Aorta (tissue), 5 donors: ENCODE measurements at regions of chr2 and their contacts with region 1.

Region 1: DNA sequence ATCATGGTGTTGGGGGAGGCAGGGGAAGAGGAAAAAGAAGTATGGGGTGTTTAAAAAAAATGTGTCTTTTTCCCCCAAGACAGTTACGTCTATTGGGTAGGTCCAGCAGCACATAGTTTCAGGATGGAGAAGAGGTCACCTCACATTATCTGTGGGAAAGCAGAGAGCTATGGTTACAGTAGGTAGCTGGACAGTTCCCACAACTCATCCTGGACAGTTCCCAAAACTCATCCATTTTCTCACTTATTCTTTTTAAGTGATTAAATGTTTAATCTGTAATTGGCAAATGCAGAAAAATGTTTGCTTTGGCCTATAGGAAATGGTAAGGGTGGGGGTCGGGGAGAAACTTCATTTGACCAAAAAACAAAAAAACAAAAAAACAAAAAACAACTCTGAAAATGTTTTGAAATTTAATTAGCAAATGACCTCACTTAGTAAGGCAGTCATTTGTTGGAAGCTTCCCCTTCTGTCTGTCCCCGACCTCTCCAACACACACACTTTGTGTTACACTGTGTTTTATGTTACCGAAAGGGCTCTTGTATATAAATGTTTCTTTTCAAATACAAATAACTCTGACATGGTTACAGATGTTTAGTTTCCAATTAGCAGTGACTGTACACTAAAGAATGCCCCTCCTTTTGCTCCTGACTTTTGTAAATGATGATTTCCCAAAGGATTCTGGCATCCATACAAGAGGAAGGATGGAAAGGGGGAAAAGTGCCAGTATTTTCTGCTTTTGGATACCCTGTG is 173.3 kb upstream of the ZFP36L2 start:
- DNase-seq: no peak
- ATAC-seq: peak; percentile 21
- H3K4me3 ChIP-seq: no peak overlapping the region
- H3K27ac ChIP-seq: peak overlapping the region; percentile 42 to 85
- H3K4me1 ChIP-seq: peaks cover 0 to 14% of the 10 kb centered on the region in 2 donors
- H3K27me3 ChIP-seq: no peaks in the 10 kb centered on the region

Region 2: DNA sequence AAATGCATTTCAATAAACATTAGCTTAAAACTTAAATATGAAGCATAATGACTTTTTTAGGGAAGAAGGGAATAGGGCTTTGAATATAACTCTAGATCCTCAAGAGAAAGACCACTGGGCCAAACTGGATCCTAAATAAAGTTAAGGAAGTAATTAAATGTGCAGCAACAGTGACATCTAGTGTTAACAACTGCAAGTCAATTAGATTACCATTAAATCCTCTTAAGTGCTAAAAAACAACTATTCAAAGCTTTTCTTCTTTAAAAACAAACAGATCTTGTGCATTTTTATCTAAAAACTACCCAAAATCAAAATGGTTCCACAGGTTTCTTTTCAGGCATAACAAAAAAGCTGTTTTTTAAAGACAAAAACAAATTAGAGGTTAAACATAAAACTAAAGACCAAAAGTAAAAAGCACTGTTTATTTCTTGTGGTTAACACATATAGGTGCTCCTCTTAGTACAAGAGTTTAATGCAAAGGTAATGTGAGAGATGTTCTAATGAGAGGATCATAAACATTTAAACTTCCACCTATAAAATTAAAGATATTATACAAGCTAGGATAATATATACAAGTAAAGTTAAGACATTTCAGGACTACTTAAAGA is 84.7 kb after region 1 on chr2:
- intact Hi-C with region 1: no loop called
- DNase-seq: no peak
- ATAC-seq: peak; percentile 79
- H3K4me3 ChIP-seq: no peak overlapping the region
- H3K27ac ChIP-seq: no peak overlapping the region
- H3K4me1 ChIP-seq: peaks cover 0 to 8% of the 10 kb centered on the region in 2 donors
- H3K27me3 ChIP-seq: no peaks in the 10 kb centered on the region

Region 3: DNA sequence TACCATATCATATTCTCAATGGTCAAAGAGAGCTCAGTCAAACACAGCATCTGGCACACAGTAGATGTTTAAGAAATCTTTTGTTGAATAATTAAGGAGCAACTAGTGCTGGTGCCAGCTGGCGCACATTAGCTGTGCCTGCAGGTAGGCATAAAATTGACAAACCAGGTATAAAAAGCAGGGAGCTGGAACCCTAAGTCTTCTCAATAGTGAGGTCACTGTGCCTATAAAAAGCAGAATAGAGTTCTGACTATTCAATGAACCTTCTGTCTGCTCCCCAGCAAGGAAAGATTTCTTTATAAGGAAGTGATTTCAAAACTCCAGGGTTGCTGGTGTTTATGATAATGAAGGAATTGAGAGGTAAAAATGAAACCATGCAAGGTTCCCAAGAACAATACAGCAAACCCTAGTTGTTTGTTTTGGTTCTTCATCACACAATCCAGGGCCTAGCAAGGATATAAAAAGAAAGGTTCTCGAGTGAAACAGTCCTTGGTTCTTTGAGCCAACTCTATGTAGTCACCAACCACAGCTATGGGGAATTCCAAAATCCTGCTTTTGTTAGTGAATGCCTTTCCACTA is 120.0 kb after region 1 on chr2:
- intact Hi-C with region 1: loop called in 1 of 2 experiments (anchors 10 kb)
- DNase-seq: peak in 1 of 2 donors; percentile 45
- ATAC-seq: peak; percentile 79
- H3K4me3 ChIP-seq: no peak overlapping the region
- H3K27ac ChIP-seq: peak overlapping the region; percentile 96 to 98
- H3K4me1 ChIP-seq: peaks cover 6 to 15% of the 10 kb centered on the region in 2 donors
- H3K27me3 ChIP-seq: no peaks in the 10 kb centered on the region